Psoas muscle (tissue), 8 donors: ENCODE measurements at regions of chr9 and their contacts with region 1.

Region 1: GRCh38 chr9:106017198-106017750 is 322.9 kb downstream of the TMEM38B start:
- DNase-seq: no peak
- ATAC-seq: no peak
- H3K4me3 ChIP-seq: no peak overlapping the region
- H3K27ac ChIP-seq: no peak overlapping the region
- H3K4me1 ChIP-seq: no peaks in the 10 kb centered on the region
- H3K27me3 ChIP-seq: peaks cover 0 to 2% (median 0%) of the 10 kb centered on the region in 3 donors
- CTCF ChIP-seq: no peak

Region 2: DNA sequence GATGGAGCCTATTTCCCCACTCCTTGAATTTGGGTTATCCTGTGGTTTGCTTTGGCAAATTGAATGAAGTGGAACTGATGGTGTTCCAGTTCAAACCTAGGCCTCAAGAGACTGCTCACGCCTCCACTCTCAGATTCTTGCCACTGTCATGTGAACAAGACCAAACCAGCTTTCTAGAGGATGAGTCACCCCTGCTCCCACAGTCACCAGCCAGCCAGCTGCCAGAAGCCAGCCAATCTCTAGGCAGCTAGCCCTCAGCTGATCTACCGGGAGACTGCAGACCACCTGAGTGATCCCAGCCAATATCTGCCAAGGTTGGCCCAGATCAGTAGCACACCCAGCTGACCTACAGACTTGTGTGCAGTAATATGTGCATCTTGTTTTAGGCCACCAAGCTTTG is 22.3 kb before region 1 on chr9:
- intact Hi-C with region 1: loop called in 1 of 2 experiments (anchors 1 kb)
- DNase-seq: no peak
- ATAC-seq: peak in 3 of 4 donors; percentile 30 to 58 (median 36)
- H3K4me3 ChIP-seq: no peak overlapping the region
- H3K27ac ChIP-seq: no peak overlapping the region
- H3K4me1 ChIP-seq: no peaks in the 10 kb centered on the region
- H3K27me3 ChIP-seq: no peaks in the 10 kb centered on the region
- CTCF ChIP-seq: no peak

Region 3: GRCh38 chr9:106066940-106067524 is 49.8 kb after region 1 on chr9:
- intact Hi-C with region 1: no loop called
- DNase-seq: no peak
- ATAC-seq: no peak
- H3K4me3 ChIP-seq: no peak overlapping the region
- H3K27ac ChIP-seq: no peak overlapping the region
- H3K4me1 ChIP-seq: no peaks in the 10 kb centered on the region
- H3K27me3 ChIP-seq: no peaks in the 10 kb centered on the region
- CTCF ChIP-seq: no peak

Region 4: GRCh38 chr9:106092083-106092482 is 74.8 kb after region 1 on chr9:
- intact Hi-C with region 1: no loop called
- DNase-seq: no peak
- ATAC-seq: no peak
- H3K4me3 ChIP-seq: no peak overlapping the region
- H3K27ac ChIP-seq: no peak overlapping the region
- H3K4me1 ChIP-seq: no peaks in the 10 kb centered on the region
- H3K27me3 ChIP-seq: no peaks in the 10 kb centered on the region
- CTCF ChIP-seq: no peak